Panc1 (cell line): ENCODE measurements at regions of chr1 and their contacts with region 1.

Region 1: GRCh38 chr1:231519166-231519565 is 9.3 kb upstream of the TSNAX start:
- DNase-seq: no peak
- ATAC-seq: no peak
- H3K4me3 ChIP-seq: no peak overlapping the region
- H3K27ac ChIP-seq: no peak overlapping the region
- H3K4me1 ChIP-seq: no peaks in the 10 kb centered on the region
- H3K27me3 ChIP-seq: no peaks in the 10 kb centered on the region
- CTCF ChIP-seq: no peak

Region 2: GRCh38 chr1:231612393-231613089 is 93.4 kb after region 1 on chr1:
- CTCF ChIA-PET with region 1: no interaction called
- POLR2A ChIA-PET with region 1: no interaction called
- in situ Hi-C with region 1: no loop called
- intact Hi-C with region 1: no loop called
- DNase-seq: no peak
- ATAC-seq: no peak
- H3K4me3 ChIP-seq: no peak overlapping the region
- H3K27ac ChIP-seq: no peak overlapping the region
- H3K4me1 ChIP-seq: no peaks in the 10 kb centered on the region
- H3K27me3 ChIP-seq: no peaks in the 10 kb centered on the region; the same call in 1 of the 2 replicates
- CTCF ChIP-seq: no peak

Region 3: GRCh38 chr1:231866392-231867331 is 347.5 kb after region 1 on chr1:
- CTCF ChIA-PET with region 1: no interaction called
- POLR2A ChIA-PET with region 1: interaction called, 16 read pairs
- in situ Hi-C with region 1: no loop called
- intact Hi-C with region 1: no loop called
- DNase-seq: peak; percentile 35
- ATAC-seq: no peak
- H3K4me3 ChIP-seq: no peak overlapping the region
- H3K27ac ChIP-seq: no peak overlapping the region
- H3K4me1 ChIP-seq: no peaks in the 10 kb centered on the region
- H3K27me3 ChIP-seq: no peaks in the 10 kb centered on the region
- CTCF ChIP-seq: peak; percentile 88